Activated CD4-positive, alpha-beta memory T cell treated with anti-CD3 and anti-CD28 coated beads, Interleukin-2, amount 10 ng/mL, durations not matched to agents 7 days and 5 days (primary cell): ENCODE measurements at regions of chr4 and their contacts with region 1.

Region 1: DNA sequence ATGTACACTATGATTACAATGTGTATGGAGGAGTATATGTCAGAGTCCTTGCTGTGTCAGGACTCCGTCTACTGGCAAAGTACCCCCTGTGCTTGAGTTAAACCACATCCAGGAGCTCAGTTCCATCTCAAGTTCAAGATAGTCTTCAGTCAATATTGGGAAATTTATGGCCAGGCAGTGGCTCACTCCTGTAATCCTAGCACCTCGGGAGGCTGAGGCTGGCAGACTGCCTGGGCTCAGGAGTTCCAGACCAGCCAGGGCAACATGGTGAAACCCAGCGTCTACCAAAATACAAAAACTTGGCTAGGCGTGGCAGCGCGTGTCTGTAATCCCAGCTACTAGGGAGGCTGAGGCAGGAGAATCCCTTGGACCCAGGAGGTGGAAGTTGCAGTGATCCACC is 5.8 kb downstream of the SLBP start:
- DNase-seq: no peak
- H3K4me3 Mint-ChIP-seq: no peak overlapping the region
- H3K27ac Mint-ChIP-seq: no peak overlapping the region
- H3K4me1 Mint-ChIP-seq: peaks cover 79% of the 10 kb centered on the region
- H3K27me3 Mint-ChIP-seq: no peaks in the 10 kb centered on the region

Region 2: DNA sequence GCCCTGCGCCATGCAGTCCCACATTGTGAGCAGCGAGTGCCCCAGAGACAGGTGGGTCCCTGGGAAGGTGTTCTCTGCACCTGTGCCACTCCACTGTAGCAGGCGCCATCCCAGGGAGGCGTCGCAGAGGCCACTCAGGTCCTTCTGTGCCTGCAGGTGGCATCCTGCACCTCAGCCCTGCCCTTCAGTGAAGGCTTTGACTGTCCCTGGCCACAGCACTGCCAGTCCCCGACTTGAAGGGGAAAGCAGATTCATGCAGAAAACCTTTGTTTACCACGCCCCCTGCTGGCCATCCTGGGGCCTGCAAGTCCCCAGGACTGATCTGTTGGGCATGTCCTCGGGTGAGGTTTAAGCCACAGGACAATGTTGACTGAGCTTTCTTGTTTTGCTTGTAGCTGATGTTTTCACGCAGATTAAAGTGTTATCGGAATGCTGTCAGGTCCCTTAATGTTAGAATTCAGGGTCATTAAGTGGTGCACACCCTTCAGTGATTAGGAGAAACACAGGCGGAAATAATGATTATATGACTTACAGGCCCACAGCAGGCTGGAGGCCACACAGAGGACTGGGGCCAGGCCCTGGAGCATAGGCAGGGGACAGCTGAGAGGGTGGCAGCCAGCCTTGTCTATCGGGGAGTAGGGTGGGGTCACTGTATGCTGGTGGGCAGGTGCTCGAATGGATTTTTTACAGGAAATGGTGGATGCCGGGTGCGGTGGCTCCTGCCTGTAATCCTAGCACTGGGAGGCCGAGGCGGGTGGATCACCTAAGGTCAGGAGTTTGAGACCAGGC is 20.0 kb after region 1 on chr4:
- CTCF ChIA-PET with region 1: interaction called, 18 read pairs
- POLR2A ChIA-PET with region 1: interaction called, 371 read pairs
- DNase-seq: peak; percentile 90
- H3K4me3 Mint-ChIP-seq: no peak overlapping the region
- H3K27ac Mint-ChIP-seq: peak overlapping the region; percentile 59
- H3K4me1 Mint-ChIP-seq: peaks cover 77% of the 10 kb centered on the region
- H3K27me3 Mint-ChIP-seq: no peaks in the 10 kb centered on the region

Region 3: DNA sequence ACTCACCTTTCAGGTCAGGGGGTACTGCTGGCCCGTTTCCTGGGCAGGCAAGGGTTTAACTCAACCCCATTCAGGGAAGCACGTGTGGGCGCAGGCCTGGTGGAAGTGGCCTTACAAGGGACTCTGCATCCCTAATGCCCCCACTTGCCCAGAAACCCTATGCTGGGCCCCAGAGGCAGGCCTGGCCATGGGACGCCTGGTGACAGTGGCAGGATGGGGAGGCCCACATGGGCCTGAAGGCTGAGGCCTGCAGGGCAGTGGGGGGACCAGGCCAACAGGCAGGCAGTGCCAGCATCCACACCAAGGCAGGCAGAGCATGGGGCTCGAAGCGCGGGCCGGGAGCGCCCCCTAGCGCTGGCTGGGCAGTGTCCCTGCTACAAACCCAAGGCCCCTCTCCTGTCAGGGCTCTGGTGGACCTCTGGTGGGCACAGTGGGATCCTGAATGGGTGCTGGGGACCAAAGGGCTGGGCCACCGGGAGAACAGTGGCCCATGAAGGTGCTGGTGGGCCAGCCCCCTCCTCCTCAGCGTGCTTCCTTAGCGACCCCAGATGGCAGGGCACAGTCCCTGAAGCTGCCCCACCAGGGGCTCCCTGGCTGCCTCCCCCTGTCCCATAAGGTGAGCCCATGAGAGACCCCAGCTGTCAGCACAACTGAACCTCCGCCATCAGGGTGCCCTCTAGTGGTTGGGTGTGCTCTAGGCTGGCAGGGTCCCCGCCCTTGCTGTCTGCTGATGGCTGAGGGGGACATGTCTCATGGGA is 103.6 kb after region 1 on chr4:
- CTCF ChIA-PET with region 1: no interaction called
- POLR2A ChIA-PET with region 1: no interaction called
- DNase-seq: peak; percentile 79
- H3K4me3 Mint-ChIP-seq: no peak overlapping the region
- H3K27ac Mint-ChIP-seq: no peak overlapping the region
- H3K4me1 Mint-ChIP-seq: no peaks in the 10 kb centered on the region
- H3K27me3 Mint-ChIP-seq: no peaks in the 10 kb centered on the region